Naive thymus-derived CD4-positive, alpha-beta T cell (primary cell): ENCODE measurements at regions of chr7 and their contacts with region 1.

Region 1: DNA sequence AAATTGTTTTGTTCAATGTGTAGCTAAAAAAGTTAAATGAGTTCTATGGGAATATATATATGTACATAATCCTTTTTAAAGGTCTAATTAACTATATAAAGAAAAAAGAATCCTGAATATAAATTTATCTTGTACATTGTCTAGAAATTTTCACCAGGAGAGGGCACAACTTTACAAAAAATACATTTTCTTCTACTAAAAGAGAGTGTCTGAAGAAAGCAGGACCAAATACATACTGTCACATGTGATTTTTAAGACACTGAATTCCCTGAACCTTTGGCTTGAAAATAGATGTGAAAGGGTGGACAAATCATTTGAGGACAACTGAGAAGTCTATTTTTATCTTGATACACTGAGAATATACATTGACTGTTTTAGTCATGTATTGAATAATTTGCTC is 204.3 kb downstream of the DGKB start:
- DNase-seq: no peak
- ATAC-seq: no peak
- H3K4me3 ChIP-seq: no peak overlapping the region
- H3K4me3 Mint-ChIP-seq: no peak overlapping the region
- H3K27ac ChIP-seq: no peak overlapping the region
- H3K27ac Mint-ChIP-seq: no peak overlapping the region
- H3K4me1 ChIP-seq: no peaks in the 10 kb centered on the region
- H3K4me1 Mint-ChIP-seq: no peaks in the 10 kb centered on the region
- H3K27me3 ChIP-seq: no peaks in the 10 kb centered on the region
- H3K27me3 Mint-ChIP-seq: no peaks in the 10 kb centered on the region

Region 2: DNA sequence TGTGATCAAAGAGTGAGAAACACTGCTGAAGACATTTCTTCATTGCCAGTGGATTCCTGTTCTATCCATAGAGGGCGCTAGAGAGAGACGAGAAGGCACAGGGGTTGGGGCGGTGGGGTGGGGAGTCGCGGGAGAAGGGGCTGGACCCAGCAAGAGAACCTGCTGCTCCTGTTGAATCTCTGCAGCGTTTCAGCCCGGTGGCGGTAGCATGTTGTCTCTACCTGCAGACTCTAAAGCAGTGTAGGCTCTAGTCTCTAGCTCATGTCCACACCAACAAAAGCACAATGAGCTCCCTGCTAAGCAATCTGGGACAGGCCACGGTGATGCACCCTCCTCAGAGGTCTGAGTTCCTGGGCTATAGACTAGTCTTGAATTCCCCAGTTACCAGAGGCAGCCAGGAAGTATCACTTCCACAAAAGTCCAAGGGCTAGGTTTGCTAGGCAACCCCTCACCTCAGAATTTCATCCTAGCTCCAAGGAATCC is 36.6 kb after region 1 on chr7:
- CTCF ChIA-PET with region 1: no interaction called
- POLR2A ChIA-PET with region 1: no interaction called
- intact Hi-C with region 1: no loop called
- DNase-seq: no peak
- ATAC-seq: no peak
- H3K4me3 ChIP-seq: no peak overlapping the region
- H3K4me3 Mint-ChIP-seq: no peak overlapping the region
- H3K27ac ChIP-seq: no peak overlapping the region
- H3K27ac Mint-ChIP-seq: no peak overlapping the region
- H3K4me1 ChIP-seq: no peaks in the 10 kb centered on the region
- H3K4me1 Mint-ChIP-seq: no peaks in the 10 kb centered on the region
- H3K27me3 ChIP-seq: no peaks in the 10 kb centered on the region
- H3K27me3 Mint-ChIP-seq: no peaks in the 10 kb centered on the region

Region 3: GRCh38 chr7:14748461-14748860 is 50.2 kb after region 1 on chr7:
- CTCF ChIA-PET with region 1: no interaction called
- POLR2A ChIA-PET with region 1: no interaction called
- intact Hi-C with region 1: no loop called
- DNase-seq: no peak
- ATAC-seq: no peak
- H3K4me3 ChIP-seq: no peak overlapping the region
- H3K4me3 Mint-ChIP-seq: no peak overlapping the region
- H3K27ac ChIP-seq: no peak overlapping the region
- H3K27ac Mint-ChIP-seq: no peak overlapping the region
- H3K4me1 ChIP-seq: no peaks in the 10 kb centered on the region
- H3K4me1 Mint-ChIP-seq: no peaks in the 10 kb centered on the region
- H3K27me3 ChIP-seq: no peaks in the 10 kb centered on the region
- H3K27me3 Mint-ChIP-seq: no peaks in the 10 kb centered on the region

Region 4: DNA sequence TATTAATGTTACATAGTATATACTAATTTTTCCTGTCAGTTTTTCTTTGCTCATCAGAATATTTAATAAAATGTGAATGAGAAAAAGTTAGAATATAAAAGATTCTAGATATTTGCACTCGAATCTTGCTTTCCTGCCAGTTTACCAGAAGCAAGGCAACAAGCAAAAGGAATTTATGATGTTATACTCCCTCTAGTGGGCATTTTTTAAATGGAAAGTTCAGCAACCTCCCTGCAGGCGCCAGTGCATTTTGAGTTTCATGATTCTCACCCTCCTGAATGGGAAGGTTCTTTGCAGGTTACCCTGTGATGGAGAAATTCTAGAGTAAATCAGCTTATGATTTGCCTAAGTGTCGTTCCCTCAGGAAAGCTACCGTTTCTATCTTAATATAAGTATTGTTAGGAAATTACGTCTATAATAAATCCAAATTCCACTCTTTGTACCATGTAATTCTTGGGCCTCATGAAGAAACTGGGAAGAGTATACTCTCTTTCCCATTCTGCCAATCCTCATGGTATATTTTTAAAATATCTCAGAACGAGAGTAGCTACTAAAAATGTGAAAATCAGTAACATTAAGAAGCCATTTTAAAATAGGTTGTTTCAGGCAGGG is 1373.1 kb after region 1 on chr7:
- CTCF ChIA-PET with region 1: no interaction called
- POLR2A ChIA-PET with region 1: no interaction called
- intact Hi-C with region 1: loop called in 1 of 2 experiments (anchors 5 kb)
- DNase-seq: peak in 5 of 9 donors; percentile 20 to 41 (median 26)
- ATAC-seq: peak; percentile 49
- H3K4me3 ChIP-seq: no peak overlapping the region
- H3K4me3 Mint-ChIP-seq: no peak overlapping the region
- H3K27ac ChIP-seq: no peak overlapping the region
- H3K27ac Mint-ChIP-seq: no peak overlapping the region
- H3K4me1 ChIP-seq: no peaks in the 10 kb centered on the region
- H3K4me1 Mint-ChIP-seq: no peaks in the 10 kb centered on the region
- H3K27me3 ChIP-seq: no peaks in the 10 kb centered on the region
- H3K27me3 Mint-ChIP-seq: peaks cover 0 to 16% (median 11%) of the 10 kb centered on the region in 5 donors